Transverse colon (tissue), 4 donors: ENCODE measurements at regions of chr10 and their contacts with region 1.

Region 1: GRCh38 chr10:95430231-95430951 is 130.8 kb downstream of the SORBS1 start:
- DNase-seq: peak; percentile 51
- H3K4me3 ChIP-seq: no peak overlapping the region
- H3K27ac ChIP-seq: peak overlapping the region; percentile 35 to 89 (median 88)
- H3K4me1 ChIP-seq: peaks cover 0 to 41% (median 8%) of the 10 kb centered on the region in 4 donors
- H3K27me3 ChIP-seq: no peaks in the 10 kb centered on the region
- CTCF ChIP-seq: peak; percentile 95 to 97 (median 97)
- EP300 ChIP-seq: no peak
- POLR2A ChIP-seq: no peak

Region 2: GRCh38 chr10:95601116-95601719 is 170.8 kb after region 1 on chr10:
- in situ Hi-C with region 1: loop called in 3 of 4 experiments (anchors 5 to 10 kb)
- intact Hi-C with region 1: loop called (anchors 2 kb)
- DNase-seq: peak; percentile 87
- H3K4me3 ChIP-seq: no peak overlapping the region
- H3K27ac ChIP-seq: peak overlapping the region; percentile 31 to 86 (median 68)
- H3K4me1 ChIP-seq: peaks cover 2 to 16% (median 10%) of the 10 kb centered on the region in 4 donors
- H3K27me3 ChIP-seq: no peaks in the 10 kb centered on the region
- CTCF ChIP-seq: peak; percentile 85 to 95 (median 93)
- EP300 ChIP-seq: no peak
- POLR2A ChIP-seq: no peak

Region 3: GRCh38 chr10:95814011-95814727 is 383.8 kb after region 1 on chr10:
- in situ Hi-C with region 1: no loop called
- intact Hi-C with region 1: no loop called
- DNase-seq: no peak
- H3K4me3 ChIP-seq: no peak overlapping the region
- H3K27ac ChIP-seq: peak overlapping the region in 3 of 4 donors; percentile 6 to 53 (median 7)
- H3K4me1 ChIP-seq: peaks cover 0 to 18% (median under 1%) of the 10 kb centered on the region in 4 donors
- H3K27me3 ChIP-seq: no peaks in the 10 kb centered on the region
- CTCF ChIP-seq: no peak
- EP300 ChIP-seq: no peak
- POLR2A ChIP-seq: no peak

Region 4: DNA sequence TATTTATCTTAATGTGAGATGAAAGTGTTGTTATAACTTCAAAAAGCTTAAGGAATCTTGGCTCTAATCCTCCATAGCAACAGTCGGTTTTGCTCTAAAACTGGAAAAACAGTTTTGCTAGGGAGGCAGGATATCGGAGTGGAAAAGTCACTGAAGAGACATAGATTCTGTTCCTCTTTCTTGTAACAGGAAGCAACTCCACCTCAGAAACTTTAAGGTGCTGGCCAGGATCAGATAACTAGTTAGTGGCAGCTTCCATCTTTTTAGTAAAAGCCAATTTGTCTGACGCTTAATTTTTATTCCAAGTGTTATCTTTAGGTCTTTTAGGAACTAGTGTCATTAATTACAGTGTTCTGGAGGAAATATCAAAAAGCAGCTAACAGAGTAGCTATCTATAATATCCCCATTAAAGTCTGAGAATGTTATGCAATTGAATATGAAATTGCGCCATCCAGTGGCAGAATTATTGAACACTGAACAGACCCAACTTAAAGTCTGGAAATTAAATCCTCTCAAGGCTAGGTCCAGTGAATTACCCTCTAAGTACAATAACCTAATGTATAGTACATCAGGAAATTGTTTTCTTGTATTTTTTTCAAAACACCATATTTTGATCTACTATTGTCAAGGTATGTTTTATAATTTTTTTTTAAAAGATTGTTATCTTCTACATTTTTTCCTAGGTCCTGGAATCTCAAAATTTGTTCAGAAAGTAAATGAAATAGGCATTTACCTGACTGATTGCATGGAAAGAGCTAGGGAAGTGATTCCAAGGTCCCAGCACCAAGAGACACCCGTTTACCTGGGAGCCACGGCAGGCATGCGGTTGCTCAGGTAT is 411.5 kb after region 1 on chr10:
- in situ Hi-C with region 1: loop called in 1 of 4 experiments (anchors 25 kb)
- intact Hi-C with region 1: no loop called
- DNase-seq: peak; percentile 44
- H3K4me3 ChIP-seq: no peak overlapping the region
- H3K27ac ChIP-seq: peak overlapping the region; percentile 30 to 56 (median 42)
- H3K4me1 ChIP-seq: peaks cover 3 to 31% (median 11%) of the 10 kb centered on the region in 4 donors
- H3K27me3 ChIP-seq: no peaks in the 10 kb centered on the region
- CTCF ChIP-seq: peak; percentile 65 to 84 (median 73)
- EP300 ChIP-seq: no peak
- POLR2A ChIP-seq: no peak